Panc1 (cell line): ENCODE measurements at regions of chr1 and their contacts with region 1.

Region 1: GRCh38 chr1:199667089-199667488 is 360.4 kb upstream of the NR5A2 start:
- DNase-seq: no peak
- ATAC-seq: no peak
- H3K4me3 ChIP-seq: no peak overlapping the region
- H3K27ac ChIP-seq: no peak overlapping the region
- H3K4me1 ChIP-seq: no peaks in the 10 kb centered on the region
- H3K27me3 ChIP-seq: no peaks in the 10 kb centered on the region
- CTCF ChIP-seq: no peak

Region 2: GRCh38 chr1:199701726-199702125 is 34.6 kb after region 1 on chr1:
- CTCF ChIA-PET with region 1: no interaction called
- POLR2A ChIA-PET with region 1: interaction called, 14 read pairs
- in situ Hi-C with region 1: no loop called
- intact Hi-C with region 1: no loop called
- DNase-seq: no peak
- ATAC-seq: no peak
- H3K4me3 ChIP-seq: no peak overlapping the region
- H3K27ac ChIP-seq: no peak overlapping the region
- H3K4me1 ChIP-seq: no peaks in the 10 kb centered on the region
- H3K27me3 ChIP-seq: no peaks in the 10 kb centered on the region
- CTCF ChIP-seq: no peak

Region 3: DNA sequence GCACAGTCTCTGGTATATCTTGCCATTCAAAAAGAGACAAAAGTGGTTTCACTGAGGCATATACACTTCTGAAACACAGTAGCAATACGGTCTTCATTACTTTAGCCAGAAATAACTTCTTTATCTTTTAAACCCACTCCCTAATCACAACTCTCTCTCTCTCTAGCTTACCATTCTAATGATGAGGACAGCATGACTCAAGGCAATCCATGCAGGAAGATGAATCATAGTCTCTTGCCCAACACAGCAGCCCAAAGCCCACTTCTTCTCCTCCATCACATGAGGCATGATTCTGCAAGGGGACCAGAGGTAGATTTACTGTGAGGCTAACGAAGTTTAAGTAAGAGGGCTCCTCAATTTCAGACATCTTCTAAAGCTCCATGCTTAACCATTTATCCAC is 75.5 kb after region 1 on chr1:
- CTCF ChIA-PET with region 1: no interaction called
- POLR2A ChIA-PET with region 1: no interaction called
- in situ Hi-C with region 1: no loop called
- intact Hi-C with region 1: no loop called
- DNase-seq: peak; percentile 43
- ATAC-seq: no peak; the same call in 1 of the 2 replicates
- H3K4me3 ChIP-seq: no peak overlapping the region
- H3K27ac ChIP-seq: no peak overlapping the region
- H3K4me1 ChIP-seq: no peaks in the 10 kb centered on the region
- H3K27me3 ChIP-seq: no peaks in the 10 kb centered on the region
- CTCF ChIP-seq: no peak